ENCODE measurements at regions of chr14 and their contacts with region 1.

Region 1: GRCh38 chr14:91911474-91912032 is 35.9 kb downstream of the FBLN5 start:
- DNase-seq: peak; percentile 51
- H3K4me3 Mint-ChIP-seq: no peak overlapping the region
- H3K27ac Mint-ChIP-seq: no peak overlapping the region
- H3K4me1 Mint-ChIP-seq: peaks cover 11% of the 10 kb centered on the region
- H3K27me3 Mint-ChIP-seq: no peaks in the 10 kb centered on the region

Region 2: GRCh38 chr14:91649930-91650329 is 261.6 kb before region 1 on chr14:
- CTCF ChIA-PET with region 1: interaction called, 25 read pairs
- POLR2A ChIA-PET with region 1: no interaction called
- DNase-seq: peak; percentile 18
- H3K4me3 Mint-ChIP-seq: no peak overlapping the region
- H3K27ac Mint-ChIP-seq: no peak overlapping the region
- H3K4me1 Mint-ChIP-seq: peaks cover 1% of the 10 kb centered on the region
- H3K27me3 Mint-ChIP-seq: no peaks in the 10 kb centered on the region

Region 3: GRCh38 chr14:91693346-91693745 is 218.2 kb before region 1 on chr14:
- CTCF ChIA-PET with region 1: interaction called, 10 read pairs
- POLR2A ChIA-PET with region 1: no interaction called
- DNase-seq: no peak
- H3K4me3 Mint-ChIP-seq: no peak overlapping the region
- H3K27ac Mint-ChIP-seq: no peak overlapping the region
- H3K4me1 Mint-ChIP-seq: peaks cover 3% of the 10 kb centered on the region
- H3K27me3 Mint-ChIP-seq: peaks cover 10% of the 10 kb centered on the region

Region 4: DNA sequence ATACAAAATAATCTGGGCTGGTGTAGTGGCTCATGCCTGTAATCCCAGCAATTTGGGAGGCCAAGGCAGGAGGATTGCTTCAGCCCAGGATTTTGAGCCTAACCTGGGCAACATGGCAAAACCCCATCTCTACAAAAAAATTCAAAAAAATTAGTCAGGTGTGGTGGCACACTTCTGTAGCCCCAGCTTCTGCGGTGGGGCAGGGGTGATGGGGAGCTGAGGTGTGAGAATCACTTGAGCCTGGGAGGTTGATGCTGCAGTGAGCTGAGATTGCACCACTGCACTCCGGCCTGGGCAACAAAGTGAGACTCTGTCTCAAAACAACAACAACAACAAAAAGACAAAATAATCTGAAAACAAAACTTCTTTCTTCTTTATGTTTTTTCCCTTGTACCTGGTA is 110.2 kb before region 1 on chr14:
- CTCF ChIA-PET with region 1: interaction called, 10 read pairs
- POLR2A ChIA-PET with region 1: no interaction called
- DNase-seq: no peak
- H3K4me3 Mint-ChIP-seq: no peak overlapping the region
- H3K27ac Mint-ChIP-seq: no peak overlapping the region
- H3K4me1 Mint-ChIP-seq: peaks cover 5% of the 10 kb centered on the region
- H3K27me3 Mint-ChIP-seq: no peaks in the 10 kb centered on the region

Region 5: DNA sequence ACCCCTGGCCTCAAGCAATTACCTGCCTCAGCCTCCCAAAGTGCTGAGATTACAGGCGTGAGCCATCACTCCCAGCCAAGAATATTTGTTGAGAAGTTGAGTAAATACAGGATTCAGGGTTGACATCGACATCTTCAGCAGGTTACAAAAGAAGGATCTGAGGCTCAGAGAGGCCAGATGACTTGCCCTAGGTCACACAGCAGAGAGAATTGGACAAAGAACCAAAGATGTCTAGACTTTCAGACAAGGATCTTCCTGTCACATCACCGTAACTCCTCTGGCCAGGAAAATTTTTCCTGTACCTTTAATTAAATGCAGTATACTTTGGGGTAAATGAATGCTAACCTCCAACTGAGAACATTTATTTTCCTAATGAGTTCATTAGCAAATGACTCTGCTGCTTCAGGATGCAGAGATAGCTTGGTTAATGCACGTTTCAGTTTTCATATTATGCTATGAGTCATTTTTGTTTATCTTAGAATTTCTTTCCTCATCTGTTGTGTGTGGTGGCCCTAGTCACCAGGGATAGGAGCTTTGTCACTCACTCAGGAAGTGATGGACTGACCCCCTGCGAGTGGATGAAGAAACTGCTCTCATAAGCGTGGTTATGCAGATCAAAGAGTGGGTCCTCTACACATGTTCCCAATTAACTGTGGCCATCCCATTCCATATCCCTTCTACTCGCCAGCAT is 53.2 kb before region 1 on chr14:
- CTCF ChIA-PET with region 1: interaction called, 12 read pairs
- POLR2A ChIA-PET with region 1: interaction called, 4 read pairs
- DNase-seq: peak; percentile 38
- H3K4me3 Mint-ChIP-seq: peak overlapping the region; percentile 16
- H3K27ac Mint-ChIP-seq: peak overlapping the region; percentile 81
- H3K4me1 Mint-ChIP-seq: peaks cover 78% of the 10 kb centered on the region
- H3K27me3 Mint-ChIP-seq: no peaks in the 10 kb centered on the region

Region 6: GRCh38 chr14:91866061-91866460 is 45.5 kb before region 1 on chr14:
- CTCF ChIA-PET with region 1: interaction called, 25 read pairs
- POLR2A ChIA-PET with region 1: interaction called, 10 read pairs
- DNase-seq: peak; percentile 53
- H3K4me3 Mint-ChIP-seq: peak overlapping the region; percentile 94
- H3K27ac Mint-ChIP-seq: peak overlapping the region; percentile 95
- H3K4me1 Mint-ChIP-seq: peaks cover 77% of the 10 kb centered on the region
- H3K27me3 Mint-ChIP-seq: no peaks in the 10 kb centered on the region

Region 7: DNA sequence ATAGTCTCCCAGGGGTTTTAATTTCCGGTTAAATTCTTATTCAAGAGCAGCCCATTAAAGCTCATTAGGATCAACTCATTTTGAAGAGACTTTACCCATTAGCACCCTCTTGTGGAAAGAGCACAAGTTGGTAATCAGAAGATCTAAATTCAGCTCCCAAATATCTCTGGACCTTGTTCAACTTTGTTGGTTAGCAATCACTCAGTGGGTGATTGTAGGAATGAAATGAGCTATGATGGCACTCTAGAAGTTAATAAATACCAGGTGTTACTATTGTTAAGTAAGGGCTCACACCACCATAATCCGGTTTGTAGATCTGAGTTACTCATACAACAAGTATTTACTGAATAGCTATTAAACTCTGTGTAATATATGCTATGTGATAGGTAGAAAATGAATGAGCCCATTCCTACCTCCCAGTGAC is 85.4 kb after region 1 on chr14:
- CTCF ChIA-PET with region 1: interaction called, 16 read pairs
- POLR2A ChIA-PET with region 1: no interaction called
- DNase-seq: no peak
- H3K4me3 Mint-ChIP-seq: no peak overlapping the region
- H3K27ac Mint-ChIP-seq: no peak overlapping the region
- H3K4me1 Mint-ChIP-seq: peaks cover 38% of the 10 kb centered on the region
- H3K27me3 Mint-ChIP-seq: no peaks in the 10 kb centered on the region

Measured in activated CD4-positive, alpha-beta memory T cell treated with anti-CD3 and anti-CD28 coated beads, Interleukin-2, amount 10 ng/mL, durations not matched to agents 7 days and 5 days (primary cell).